Activated T-helper 2 cell treated with anti-CD3 and anti-CD28 coated beads, Interferon-gamma antibody, Interleukin-2, Interleukin-4, amounts not matched to agents 10 μg/mL and 5 μg/mL and 100 μg/mL, durations not matched to agents 14 hours and 24 hours and 36 hours (primary cell): ENCODE measurements at regions of chr1 and their contacts with region 1.

Region 1: GRCh38 chr1:212994926-212995325 is 20.7 kb downstream of the ANGEL2 start:
- DNase-seq: no peak
- H3K4me3 Mint-ChIP-seq: no peak overlapping the region
- H3K27ac Mint-ChIP-seq: no peak overlapping the region
- H3K4me1 Mint-ChIP-seq: peaks cover 2% of the 10 kb centered on the region
- H3K27me3 Mint-ChIP-seq: no peaks in the 10 kb centered on the region

Region 2: DNA sequence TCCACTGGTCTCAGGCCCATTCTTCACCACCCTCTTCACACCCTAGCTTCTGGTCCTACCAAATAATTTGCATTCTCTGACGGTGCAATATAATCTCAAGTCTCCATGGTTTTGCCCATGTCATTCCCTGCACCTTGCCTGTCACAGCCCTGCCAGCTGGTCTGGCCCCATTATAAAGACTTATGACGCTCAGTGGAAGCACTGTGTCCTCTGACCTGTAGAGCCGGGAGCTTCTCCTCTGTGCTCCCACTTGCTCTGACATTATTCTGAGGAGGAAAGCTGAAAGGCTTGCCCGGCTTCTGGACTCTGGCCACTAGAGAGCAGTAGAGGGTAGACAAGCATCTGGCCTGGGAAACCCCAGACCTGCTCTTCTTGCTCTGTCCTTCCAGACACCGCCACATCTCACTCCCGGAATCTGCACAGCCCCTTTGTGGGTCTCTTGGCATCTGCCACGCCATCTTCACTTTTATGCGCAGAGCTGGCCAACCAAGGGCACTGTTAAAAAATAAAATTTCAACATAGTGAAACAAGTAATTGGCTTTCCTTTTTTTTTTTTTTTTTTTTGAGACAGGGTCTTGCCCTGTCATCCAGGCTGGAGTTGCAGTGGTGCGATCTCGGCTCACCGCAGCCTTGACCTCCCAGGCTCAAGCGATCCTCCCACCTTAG is 517.8 kb before region 1 on chr1:
- intact Hi-C with region 1: loop called (anchors 5 kb)
- DNase-seq: peak; percentile 65
- H3K4me3 Mint-ChIP-seq: no peak overlapping the region
- H3K27ac Mint-ChIP-seq: peak overlapping the region; percentile 16
- H3K4me1 Mint-ChIP-seq: peaks cover 12% of the 10 kb centered on the region
- H3K27me3 Mint-ChIP-seq: peaks cover 17% of the 10 kb centered on the region

Region 3: DNA sequence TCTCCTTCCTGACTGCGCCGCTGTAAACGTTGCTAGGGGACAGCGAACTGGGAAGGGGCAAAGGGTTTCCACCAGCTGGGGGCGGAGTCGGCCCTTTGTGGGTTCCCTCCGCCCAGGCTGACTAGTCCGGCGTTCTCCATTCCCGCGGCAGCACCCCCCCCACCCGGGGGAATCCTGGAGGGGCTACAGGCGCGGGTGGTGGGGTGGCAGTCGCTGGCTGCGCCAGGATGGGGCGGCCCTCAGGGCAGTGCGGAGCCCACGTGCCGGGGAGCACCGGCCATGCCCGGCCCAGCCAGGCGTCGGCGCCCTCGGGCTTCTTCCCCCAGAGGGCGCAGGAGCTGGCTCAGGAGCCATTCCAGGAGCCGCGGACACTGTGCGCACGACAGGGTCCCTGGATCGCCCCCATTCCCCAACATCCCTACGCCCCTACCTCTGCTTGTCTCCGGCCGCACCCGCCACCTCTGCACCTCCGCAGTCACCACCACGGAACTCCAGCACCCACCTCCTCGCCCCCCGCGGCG is 295.8 kb before region 1 on chr1:
- intact Hi-C with region 1: no loop called
- DNase-seq: peak; percentile 52
- H3K4me3 Mint-ChIP-seq: peak overlapping the region; percentile 90
- H3K27ac Mint-ChIP-seq: peak overlapping the region; percentile 84
- H3K4me1 Mint-ChIP-seq: peaks cover 64% of the 10 kb centered on the region
- H3K27me3 Mint-ChIP-seq: no peaks in the 10 kb centered on the region

Region 4: DNA sequence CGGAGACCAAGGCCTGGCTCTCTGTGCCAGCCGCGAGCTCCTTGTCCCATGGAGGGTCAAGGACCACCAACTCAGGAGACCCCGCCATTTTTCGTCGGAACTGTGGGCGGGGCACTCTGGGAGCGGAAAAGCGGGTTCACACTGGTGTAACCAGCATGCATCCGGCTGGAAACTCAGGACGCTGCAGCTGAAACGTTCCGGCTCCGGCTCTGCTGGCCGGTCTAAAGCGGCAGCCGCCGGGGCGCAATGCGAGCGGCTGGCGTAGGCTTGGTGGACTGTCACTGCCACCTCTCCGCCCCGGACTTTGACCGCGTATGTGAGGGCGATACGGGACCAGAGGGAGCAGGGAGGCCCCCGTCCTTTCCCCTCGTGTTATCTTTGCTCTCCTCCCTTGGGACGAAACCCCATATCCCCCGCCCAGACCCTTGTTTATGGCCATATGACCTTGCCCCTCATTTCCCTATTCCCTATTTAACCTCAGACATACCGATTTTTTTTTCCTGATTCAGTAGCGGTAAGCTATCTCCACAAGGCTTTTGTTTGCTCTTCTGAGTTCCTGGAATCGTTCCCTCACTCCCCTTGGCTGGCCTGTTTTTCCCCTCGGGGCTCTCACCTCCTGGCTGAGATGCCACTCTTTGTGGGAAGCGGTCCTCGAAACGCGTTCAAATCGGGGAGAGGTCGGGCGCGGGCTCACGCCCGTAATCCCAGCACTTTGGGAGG is 203.1 kb before region 1 on chr1 and contains the starts of genes NSL1 and TATDN3:
- intact Hi-C with region 1: loop called (anchors 5 kb)
- DNase-seq: peak; percentile 94
- H3K4me3 Mint-ChIP-seq: peak within 1 kb of the TSS; percentile 100
- H3K27ac Mint-ChIP-seq: peak within 1 kb of the TSS; percentile 98
- H3K4me1 Mint-ChIP-seq: peaks cover 25% of the 10 kb centered on the region
- H3K27me3 Mint-ChIP-seq: no peaks in the 10 kb centered on the region
- total RNA-seq, gene NSL1: 45.4 and 52.6 TPM in 2 replicates
- total RNA-seq, gene TATDN3: 16.7 and 18.7 TPM in 2 replicates

Region 5: DNA sequence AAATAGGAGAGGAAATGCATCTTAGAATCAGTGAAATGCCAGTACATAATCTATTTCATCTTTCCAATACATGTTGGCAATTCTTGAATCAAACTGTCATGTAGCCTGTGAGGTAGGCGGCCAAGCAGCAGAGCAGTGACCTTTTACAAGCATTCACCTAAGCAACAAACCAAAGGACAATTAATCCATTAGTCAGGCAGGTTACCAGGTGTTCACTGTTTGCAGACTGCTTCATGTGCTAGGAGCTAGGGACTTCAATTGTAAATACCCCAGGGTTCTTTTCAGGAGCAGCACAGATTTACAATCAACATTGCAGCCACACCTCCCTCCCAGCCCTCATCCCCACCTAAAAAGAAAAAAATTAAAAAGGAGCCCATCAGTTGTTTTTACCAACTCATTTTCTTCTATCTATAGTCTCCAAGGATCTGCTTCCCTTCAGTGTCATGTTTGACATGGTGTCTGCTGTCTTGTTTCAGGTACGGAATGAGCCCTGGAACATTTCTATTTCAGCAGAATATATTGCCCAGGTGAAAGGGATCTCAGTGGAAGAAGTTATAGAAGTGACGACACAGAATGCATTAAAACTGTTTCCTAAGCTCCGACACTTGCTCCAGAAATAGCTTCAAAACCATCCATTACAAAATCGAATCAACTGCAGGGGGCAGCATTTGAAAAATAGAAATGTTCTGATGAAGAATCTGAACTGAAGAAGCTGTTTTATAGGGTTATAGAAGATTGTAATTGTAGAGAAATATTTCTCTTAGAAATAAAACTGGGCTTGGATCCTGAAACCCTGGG is 180.2 kb before region 1 on chr1:
- intact Hi-C with region 1: loop called (anchors 2 kb)
- DNase-seq: no peak
- H3K4me3 Mint-ChIP-seq: no peak overlapping the region
- H3K27ac Mint-ChIP-seq: no peak overlapping the region
- H3K4me1 Mint-ChIP-seq: peaks cover 3% of the 10 kb centered on the region
- H3K27me3 Mint-ChIP-seq: no peaks in the 10 kb centered on the region